ENCODE measurements at regions of chr11 and their contacts with region 1.

Region 1: DNA sequence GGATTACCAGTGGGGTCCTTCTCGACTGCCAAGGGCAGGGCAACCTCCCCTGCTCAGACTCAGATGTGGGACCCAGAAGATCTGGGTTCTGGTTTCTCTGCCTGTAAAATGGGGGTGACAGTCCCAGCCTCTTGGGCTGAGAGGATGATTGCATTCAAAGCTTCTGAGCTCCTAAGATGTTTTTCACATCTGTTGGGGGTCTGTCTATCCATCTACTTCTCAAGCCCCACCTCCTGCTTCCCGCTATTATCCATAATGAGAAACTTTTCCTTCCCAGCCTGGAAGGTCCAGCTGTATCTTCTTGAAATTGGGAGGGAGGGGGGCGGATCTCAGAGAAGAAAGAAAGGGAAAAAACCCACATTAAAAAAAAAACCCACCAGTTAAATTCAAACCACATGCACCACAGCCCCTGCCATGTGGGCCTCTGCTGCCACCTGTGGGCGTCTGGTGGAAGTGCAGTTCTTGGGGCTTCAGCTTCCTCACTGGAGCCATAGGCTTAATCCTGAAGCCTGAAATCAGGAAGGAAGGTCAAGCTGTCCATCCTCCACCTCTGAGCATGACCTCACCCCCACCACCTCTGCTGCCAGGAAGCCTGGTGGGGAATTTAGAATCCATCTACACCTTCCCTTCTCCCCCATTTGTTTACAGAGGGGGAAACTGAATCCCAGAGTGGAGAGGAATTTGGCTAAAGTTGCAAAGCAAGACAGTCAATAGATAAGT is 27.3 kb downstream of the ARHGEF17 start:
- DNase-seq: peak; percentile 62 to 72 (median 67)
- H3K4me3 ChIP-seq: no peak overlapping the region
- H3K4me3 Mint-ChIP-seq: no peak overlapping the region
- H3K27ac ChIP-seq: no peak overlapping the region
- H3K27ac Mint-ChIP-seq: no peak overlapping the region
- H3K4me1 ChIP-seq: no peaks in the 10 kb centered on the region
- H3K4me1 Mint-ChIP-seq: no peaks in the 10 kb centered on the region
- H3K27me3 ChIP-seq: no peaks in the 10 kb centered on the region
- H3K27me3 Mint-ChIP-seq: peaks cover 0 to 3% of the 10 kb centered on the region in 2 donors

Region 2: DNA sequence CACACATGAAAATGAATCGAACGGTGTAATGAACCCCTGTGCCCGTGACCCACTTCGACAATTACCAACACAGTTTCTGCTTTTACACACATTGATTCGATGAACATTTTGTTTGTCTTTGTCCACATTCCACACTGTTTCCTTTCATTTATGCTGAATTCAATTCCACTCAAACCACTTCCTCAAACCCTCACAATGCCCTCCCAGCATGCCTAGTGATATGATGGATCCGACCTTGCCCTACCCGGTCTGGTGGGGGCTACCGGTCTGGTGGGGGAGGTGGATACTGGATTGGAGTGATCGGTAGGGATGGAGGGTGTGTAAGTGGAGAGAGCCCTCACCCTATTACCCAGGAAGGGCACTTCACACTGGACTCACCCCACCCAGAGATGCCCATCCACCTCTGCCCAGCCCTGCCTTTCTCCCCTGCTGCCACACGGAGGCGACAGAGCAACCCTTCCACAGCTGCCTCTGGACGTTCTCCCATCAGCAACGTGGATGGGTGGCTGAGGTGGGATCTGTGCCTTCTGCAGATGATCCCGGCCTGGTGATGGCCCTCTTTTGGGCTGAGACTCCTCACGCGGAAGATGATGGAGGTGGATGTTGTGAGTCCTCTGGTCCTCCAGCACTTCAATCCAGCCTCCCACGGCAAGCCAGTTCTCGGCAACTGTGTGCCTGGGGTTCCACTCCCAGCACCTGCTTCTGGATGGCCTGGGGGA is 150.3 kb before region 1 on chr11:
- CTCF ChIA-PET with region 1: interaction called, 7 read pairs
- POLR2A ChIA-PET with region 1: no interaction called
- intact Hi-C with region 1: loop called (anchors 2 kb)
- DNase-seq: peak in 4 of 5 donors; percentile 24 to 41 (median 33)
- H3K4me3 ChIP-seq: no peak overlapping the region
- H3K4me3 Mint-ChIP-seq: peak overlapping the region in 1 of 8 donors; percentile 48
- H3K27ac ChIP-seq: no peak overlapping the region
- H3K27ac Mint-ChIP-seq: no peak overlapping the region
- H3K4me1 ChIP-seq: no peaks in the 10 kb centered on the region
- H3K4me1 Mint-ChIP-seq: peaks cover 0 to 5% (median 3%) of the 10 kb centered on the region in 4 donors
- H3K27me3 ChIP-seq: no peaks in the 10 kb centered on the region
- H3K27me3 Mint-ChIP-seq: peaks cover 3 to 14% of the 10 kb centered on the region in 2 donors

Region 3: DNA sequence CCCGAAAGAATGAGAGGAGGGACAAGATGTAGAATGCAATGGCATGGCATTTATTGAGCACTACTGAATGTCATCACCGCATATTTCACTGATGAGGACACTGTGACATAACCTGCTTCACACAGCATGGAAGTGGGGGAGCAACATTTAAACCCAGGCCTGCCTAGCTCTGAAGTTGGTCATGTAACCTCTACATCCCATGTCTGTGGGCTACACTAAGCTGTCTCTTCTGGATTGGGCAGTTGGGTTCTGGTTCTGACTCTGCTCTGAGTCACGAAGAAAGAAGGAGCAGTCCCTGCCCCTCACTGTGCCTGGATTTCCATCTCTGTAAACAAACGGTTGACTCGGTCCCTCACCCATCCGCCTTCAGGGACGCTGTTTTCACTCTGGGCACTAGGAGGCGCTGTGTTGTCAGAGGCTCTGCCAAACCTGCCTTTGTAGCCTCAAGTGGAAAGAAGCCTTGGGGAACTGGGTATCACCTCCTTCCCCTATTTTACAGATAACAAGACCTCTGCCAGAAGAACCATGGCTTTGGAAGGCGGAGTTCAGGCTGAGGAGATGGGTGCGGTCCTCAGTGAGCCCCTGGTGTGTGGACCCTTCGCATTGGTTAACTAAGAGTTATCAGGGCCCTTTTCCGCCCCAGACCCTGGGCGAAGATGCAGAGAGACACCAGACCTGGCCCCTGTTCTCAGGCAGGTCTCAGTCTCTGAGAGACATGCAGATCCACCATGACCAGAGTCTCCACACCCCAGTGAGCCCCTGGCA is 40.0 kb before region 1 on chr11:
- CTCF ChIA-PET with region 1: interaction called, 33 read pairs
- POLR2A ChIA-PET with region 1: no interaction called
- intact Hi-C with region 1: loop called (anchors 1 kb)
- DNase-seq: peak; percentile 54 to 66 (median 59)
- H3K4me3 ChIP-seq: no peak overlapping the region
- H3K4me3 Mint-ChIP-seq: no peak overlapping the region
- H3K27ac ChIP-seq: no peak overlapping the region
- H3K27ac Mint-ChIP-seq: no peak overlapping the region
- H3K4me1 ChIP-seq: no peaks in the 10 kb centered on the region
- H3K4me1 Mint-ChIP-seq: peaks cover 0 to 2% (median 0%) of the 10 kb centered on the region in 4 donors
- H3K27me3 ChIP-seq: no peaks in the 10 kb centered on the region
- H3K27me3 Mint-ChIP-seq: peaks cover 9 to 10% of the 10 kb centered on the region in 2 donors

Region 4: GRCh38 chr11:73307323-73308002 is 27.9 kb before region 1 on chr11:
- CTCF ChIA-PET with region 1: interaction called, 110 read pairs
- POLR2A ChIA-PET with region 1: interaction called, 11 read pairs
- intact Hi-C with region 1: loop called (anchors 1 kb)
- DNase-seq: peak; percentile 82 to 87 (median 85)
- H3K4me3 ChIP-seq: peak overlapping the region; percentile 23 to 58
- H3K4me3 Mint-ChIP-seq: peak overlapping the region; percentile 84 to 96 (median 94)
- H3K27ac ChIP-seq: no peak overlapping the region
- H3K27ac Mint-ChIP-seq: peak overlapping the region in 6 of 7 donors; percentile 10 to 88 (median 54)
- H3K4me1 ChIP-seq: peaks cover 8% of the 10 kb centered on the region
- H3K4me1 Mint-ChIP-seq: peaks cover 6 to 18% (median 11%) of the 10 kb centered on the region in 4 donors
- H3K27me3 ChIP-seq: no peaks in the 10 kb centered on the region
- H3K27me3 Mint-ChIP-seq: peaks cover 7 to 19% of the 10 kb centered on the region in 2 donors

Region 5: GRCh38 chr11:73314117-73314961 is 21.0 kb before region 1 on chr11:
- CTCF ChIA-PET with region 1: interaction called, 110 read pairs
- POLR2A ChIA-PET with region 1: no interaction called
- intact Hi-C with region 1: no loop called
- DNase-seq: no peak
- H3K4me3 ChIP-seq: no peak overlapping the region
- H3K4me3 Mint-ChIP-seq: no peak overlapping the region
- H3K27ac ChIP-seq: no peak overlapping the region
- H3K27ac Mint-ChIP-seq: peak overlapping the region in 1 of 7 donors; percentile 53
- H3K4me1 ChIP-seq: peaks cover 5% of the 10 kb centered on the region
- H3K4me1 Mint-ChIP-seq: peaks cover 0 to 9% (median 0%) of the 10 kb centered on the region in 4 donors
- H3K27me3 ChIP-seq: no peaks in the 10 kb centered on the region
- H3K27me3 Mint-ChIP-seq: peaks cover 2 to 3% of the 10 kb centered on the region in 2 donors

Region 6: DNA sequence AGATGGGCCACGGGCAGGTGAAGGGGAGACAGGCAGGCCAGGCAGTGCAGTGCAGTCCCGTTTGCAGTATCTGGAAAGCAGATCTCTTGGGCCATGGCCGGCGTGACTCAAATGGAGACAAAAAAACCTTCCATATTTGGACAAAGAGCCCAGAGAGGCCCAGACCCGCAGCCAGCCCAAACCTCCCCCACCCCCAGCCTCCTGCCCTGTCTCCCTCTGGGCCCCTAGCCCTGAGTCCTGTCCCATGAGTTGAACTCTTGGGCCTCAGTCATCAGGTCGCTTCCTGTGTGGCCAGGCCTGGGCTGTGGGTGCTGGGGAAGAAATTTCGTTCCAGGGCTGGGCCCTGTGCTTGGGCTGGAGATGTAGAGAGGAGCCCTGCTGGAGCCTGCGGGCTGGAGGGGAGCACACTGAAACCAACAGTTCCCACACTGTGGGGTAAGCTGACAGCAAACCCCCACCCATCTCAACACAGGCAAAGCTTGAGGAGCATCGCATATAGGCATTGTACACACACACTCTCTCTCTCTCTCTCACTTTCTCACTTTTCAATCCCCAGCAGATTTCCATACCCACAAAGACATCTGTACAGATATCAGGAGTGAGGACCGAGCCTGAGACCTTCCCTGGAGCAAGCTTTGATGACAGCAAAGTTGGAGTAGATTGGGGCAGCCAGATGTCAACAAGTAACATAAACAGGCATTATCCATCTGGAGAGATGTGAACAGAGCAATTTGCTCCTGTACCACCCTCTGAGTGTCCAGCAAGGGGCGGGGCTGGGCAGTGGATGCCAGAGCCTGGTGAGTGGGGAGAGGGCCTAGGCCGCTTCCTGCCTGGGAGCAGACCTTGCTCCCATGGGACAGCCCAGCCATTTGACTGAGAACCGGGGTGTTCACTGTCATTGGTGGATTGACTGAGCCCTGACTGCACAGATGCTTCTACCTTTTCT is 10.1 kb before region 1 on chr11:
- CTCF ChIA-PET with region 1: interaction called, 32 read pairs
- POLR2A ChIA-PET with region 1: no interaction called
- intact Hi-C with region 1: no loop called
- DNase-seq: no peak
- H3K4me3 ChIP-seq: no peak overlapping the region
- H3K4me3 Mint-ChIP-seq: no peak overlapping the region
- H3K27ac ChIP-seq: no peak overlapping the region
- H3K27ac Mint-ChIP-seq: peak overlapping the region in 3 of 7 donors; percentile 7 to 86 (median 22)
- H3K4me1 ChIP-seq: peaks cover 4% of the 10 kb centered on the region
- H3K4me1 Mint-ChIP-seq: peaks cover 0 to 6% (median 3%) of the 10 kb centered on the region in 4 donors
- H3K27me3 ChIP-seq: no peaks in the 10 kb centered on the region
- H3K27me3 Mint-ChIP-seq: no peaks in the 10 kb centered on the region

Measured in CD4-positive, alpha-beta memory T cell (primary cell).